Kidney (tissue), 22 donors: ENCODE measurements at regions of chr12 and their contacts with region 1.

Region 1: DNA sequence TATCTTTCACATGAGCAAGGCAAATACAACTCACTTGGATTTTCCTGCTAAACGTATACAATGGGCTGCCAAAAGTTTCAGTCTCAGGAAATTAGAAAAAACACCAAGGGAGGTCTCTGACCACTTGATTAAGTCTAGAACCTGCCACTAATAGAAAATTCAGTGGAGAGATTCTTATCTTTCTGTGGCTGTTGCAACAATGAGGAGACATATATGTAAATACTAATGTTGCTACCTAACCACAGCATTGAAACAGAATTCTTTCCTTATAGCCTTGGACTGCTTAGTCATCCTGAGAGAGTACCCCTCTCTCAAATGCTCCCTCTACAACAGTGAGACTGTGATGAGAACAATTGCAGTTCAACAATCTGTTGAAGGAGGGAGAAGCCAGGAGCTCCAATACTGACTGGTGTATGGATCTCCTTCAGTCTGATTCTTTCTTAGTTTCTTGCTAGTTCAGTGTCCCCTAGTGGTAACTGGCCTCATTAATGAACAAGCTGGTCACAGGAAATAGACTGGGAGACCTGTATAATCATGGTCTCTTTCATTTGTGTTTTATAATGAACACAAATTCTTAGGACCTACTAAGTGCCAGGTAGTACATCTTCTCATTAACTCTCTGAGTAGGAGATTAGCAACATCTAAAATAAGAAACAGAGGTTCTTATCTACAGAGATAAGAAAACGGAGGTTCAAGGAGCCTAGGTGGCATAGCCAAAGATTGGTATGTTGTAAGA is 164.5 kb downstream of the SLC38A4 start:
- DNase-seq: peak in 3 of 5 donors; percentile 28 to 89 (median 82)
- H3K4me3 ChIP-seq: no peak overlapping the region
- H3K27ac ChIP-seq: peak overlapping the region in 1 of 2 donors; percentile 59
- H3K4me1 ChIP-seq: peaks cover 0 to 3% (median 0%) of the 10 kb centered on the region in 3 donors
- H3K27me3 ChIP-seq: no peaks in the 10 kb centered on the region
- CTCF ChIP-seq: peak; percentile 80

Region 2: DNA sequence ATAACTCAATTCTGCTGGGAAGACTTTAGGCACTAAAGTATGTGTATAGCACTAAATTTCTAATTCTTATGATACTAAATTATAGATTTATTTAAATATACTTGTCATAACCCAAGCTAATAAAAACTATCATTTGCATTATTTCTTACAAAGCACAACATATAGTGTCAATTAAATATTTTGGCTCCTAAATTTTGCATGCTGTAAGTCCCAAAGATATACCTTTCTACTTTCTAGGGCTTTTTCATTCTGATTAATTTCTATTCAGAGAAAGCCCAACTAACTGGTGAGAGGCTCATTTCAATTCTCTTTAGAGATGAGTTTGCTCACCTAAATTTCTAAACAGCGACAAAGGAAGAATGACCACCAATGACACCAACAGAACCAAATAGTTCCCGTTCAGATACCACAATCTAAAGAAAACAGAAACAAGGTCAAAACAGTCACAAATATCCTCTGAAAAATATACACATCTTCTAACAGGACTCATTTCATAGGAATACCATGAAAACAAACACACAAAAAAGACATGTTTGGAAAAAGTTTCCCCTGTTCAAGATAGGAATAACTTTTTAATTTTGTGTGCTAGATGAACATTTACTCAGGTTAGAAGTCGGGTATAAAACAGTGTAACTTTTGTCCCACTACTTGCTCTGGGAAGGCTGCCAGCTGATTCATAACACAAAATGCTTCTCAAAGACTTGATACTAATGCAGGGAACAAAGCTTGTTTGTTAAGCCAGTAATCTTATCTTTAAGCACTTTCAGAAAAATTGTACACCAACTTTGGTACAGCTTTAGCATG is 296.3 kb before region 1 on chr12:
- intact Hi-C with region 1: loop called (anchors 10 kb)
- DNase-seq: peak in 1 of 5 donors; percentile 52
- H3K4me3 ChIP-seq: no peak overlapping the region
- H3K27ac ChIP-seq: peak overlapping the region in 1 of 2 donors; percentile 57
- H3K4me1 ChIP-seq: peaks cover 0 to 26% (median 26%) of the 10 kb centered on the region in 3 donors
- H3K27me3 ChIP-seq: no peaks in the 10 kb centered on the region
- CTCF ChIP-seq: no peak

Region 3: GRCh38 chr12:46442239-46442638 is 219.0 kb before region 1 on chr12:
- intact Hi-C with region 1: no loop called
- DNase-seq: peak in 2 of 5 donors; percentile 30 to 59
- H3K4me3 ChIP-seq: no peak overlapping the region
- H3K27ac ChIP-seq: no peak overlapping the region
- H3K4me1 ChIP-seq: peaks cover 4 to 7% (median 5%) of the 10 kb centered on the region in 3 donors
- H3K27me3 ChIP-seq: no peaks in the 10 kb centered on the region
- CTCF ChIP-seq: no peak